Activated B cell treated with CpG ODN at 0.5 μM for 24 hours (primary cell): ENCODE measurements at regions of chr9 and their contacts with region 1.

Region 1: GRCh38 chr9:35732122-35732799 is at the starts of genes CREB3 and TLN1:
- DNase-seq: peak; percentile 94
- ATAC-seq: peak; percentile 86
- H3K4me3 Mint-ChIP-seq: peak within 1 kb of the TSS; percentile 32
- H3K27ac Mint-ChIP-seq: peak within 1 kb of the TSS; percentile 93
- H3K4me1 Mint-ChIP-seq: peaks cover 9% of the 10 kb centered on the region
- H3K27me3 Mint-ChIP-seq: no peaks in the 10 kb centered on the region
- CTCF ChIP-seq: no peak
- total RNA-seq, gene CREB3: 13.8 and 16.9 TPM in 2 replicates
- total RNA-seq, gene TLN1: 327 and 362 TPM in 2 replicates

Region 2: DNA sequence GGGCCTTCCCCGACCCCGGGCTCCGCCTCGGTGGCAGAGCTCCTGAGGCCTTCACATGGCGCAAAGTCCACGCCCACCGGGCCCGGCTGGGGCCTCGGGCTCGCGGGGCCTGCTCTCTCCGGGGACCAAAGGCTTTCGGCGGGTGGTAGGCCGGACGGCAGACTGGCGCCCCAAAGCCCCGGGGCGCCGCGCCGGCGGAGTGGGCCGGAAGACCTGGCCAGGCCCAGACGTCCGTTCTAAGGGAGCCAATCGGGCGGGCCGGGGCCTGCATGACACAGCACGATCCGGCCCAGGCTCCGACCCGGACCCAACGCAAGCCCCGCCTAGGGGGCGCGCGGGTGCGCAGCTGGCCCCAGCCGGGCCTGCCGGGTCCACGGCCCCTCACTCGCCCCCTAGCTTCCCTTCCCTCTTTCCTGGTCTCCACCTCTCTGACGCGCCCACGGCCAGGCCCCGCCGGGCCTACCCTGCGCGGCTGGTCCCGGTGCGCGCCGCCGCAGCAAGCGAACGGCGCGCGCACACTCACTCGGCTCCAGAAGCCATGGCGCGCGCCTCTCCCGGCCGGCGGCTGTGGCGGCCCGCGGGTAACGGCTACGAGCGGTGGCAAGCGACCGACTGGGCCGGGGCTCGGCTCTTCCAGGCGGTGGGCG is 660.3 kb before region 1 on chr9:
- CTCF ChIA-PET with region 1: no interaction called
- POLR2A ChIA-PET with region 1: no interaction called
- intact Hi-C with region 1: loop called (anchors 1 kb)
- DNase-seq: peak; percentile 80
- ATAC-seq: peak; percentile 63
- H3K4me3 Mint-ChIP-seq: peak overlapping the region; percentile 89
- H3K27ac Mint-ChIP-seq: peak overlapping the region; percentile 93
- H3K4me1 Mint-ChIP-seq: peaks cover 51% of the 10 kb centered on the region
- H3K27me3 Mint-ChIP-seq: no peaks in the 10 kb centered on the region
- CTCF ChIP-seq: no peak

Region 3: DNA sequence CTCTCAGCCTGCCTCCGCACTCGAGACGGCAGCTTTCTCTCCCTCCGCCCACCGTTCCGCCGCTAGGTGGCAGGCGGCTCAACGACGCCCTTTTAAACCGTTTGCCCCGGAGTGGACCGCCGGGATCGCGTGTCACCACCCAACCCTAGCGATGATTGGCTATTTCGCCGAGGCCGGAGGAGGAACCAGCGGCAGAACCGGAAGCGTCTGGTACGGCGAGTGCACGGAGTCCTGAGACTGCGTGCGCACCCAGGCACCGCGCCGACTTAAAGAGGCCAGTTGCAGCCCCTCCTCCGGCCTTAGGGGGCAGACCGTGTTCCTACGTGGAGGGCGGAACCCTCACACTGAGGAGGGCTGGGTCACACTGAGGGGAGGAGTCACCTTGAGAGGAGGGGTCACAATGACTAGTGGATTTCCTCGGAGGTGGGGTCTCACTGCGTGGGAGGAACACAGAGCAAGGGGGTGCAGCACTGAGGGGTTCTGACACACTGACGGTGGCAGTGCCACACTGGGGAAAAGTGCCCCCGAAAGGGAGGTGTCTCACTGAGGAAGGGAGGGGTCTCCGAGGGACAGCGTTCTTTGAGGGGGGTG is 128.2 kb before region 1 on chr9:
- CTCF ChIA-PET with region 1: interaction called, 17 read pairs
- POLR2A ChIA-PET with region 1: interaction called, 27 read pairs
- intact Hi-C with region 1: loop called (anchors 1 kb)
- DNase-seq: peak; percentile 95
- ATAC-seq: peak; percentile 90
- H3K4me3 Mint-ChIP-seq: peak overlapping the region; percentile 97
- H3K27ac Mint-ChIP-seq: peak overlapping the region; percentile 97
- H3K4me1 Mint-ChIP-seq: peaks cover 37% of the 10 kb centered on the region
- H3K27me3 Mint-ChIP-seq: no peaks in the 10 kb centered on the region
- CTCF ChIP-seq: peak; percentile 76

Region 4: DNA sequence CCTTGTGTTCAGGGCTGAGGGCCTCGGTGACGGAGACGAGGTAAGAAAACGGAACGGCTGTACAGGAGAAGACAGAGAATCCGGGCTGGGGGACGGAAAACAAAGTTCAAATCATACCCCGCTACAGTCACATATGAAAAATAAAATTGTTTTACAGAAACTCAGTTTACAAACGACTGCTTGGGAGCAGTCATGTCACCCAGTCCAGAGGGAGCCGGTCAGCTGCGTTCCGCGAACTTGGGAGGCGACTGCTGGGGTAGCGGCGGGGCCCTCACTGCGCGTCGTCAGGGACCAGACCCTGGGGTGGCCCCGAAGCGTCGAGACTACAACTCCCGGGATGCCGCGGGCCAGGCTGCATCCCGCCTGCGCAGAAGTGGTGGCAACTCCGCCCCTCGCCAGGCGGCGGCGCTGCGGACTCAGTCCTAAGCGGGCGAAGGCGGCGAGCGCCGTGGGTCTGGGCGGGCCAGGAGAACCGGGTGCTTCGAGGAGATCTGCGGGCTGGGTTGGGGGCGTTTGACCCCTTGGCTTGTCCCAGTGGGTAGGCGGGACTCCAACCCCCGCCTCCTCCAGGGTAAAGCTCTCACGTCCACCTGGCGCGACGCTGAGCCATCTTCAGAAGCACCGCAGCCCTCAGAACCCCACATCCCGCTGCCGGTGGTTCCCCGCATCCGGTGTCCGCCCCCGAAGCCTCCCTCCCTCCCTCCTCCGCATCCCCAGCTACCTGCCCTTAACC is 85.6 kb before region 1 on chr9:
- CTCF ChIA-PET with region 1: interaction called, 11 read pairs
- POLR2A ChIA-PET with region 1: interaction called, 47 read pairs
- intact Hi-C with region 1: loop called (anchors 1 kb)
- DNase-seq: peak; percentile 94
- ATAC-seq: peak; percentile 88
- H3K4me3 Mint-ChIP-seq: peak overlapping the region; percentile 97
- H3K27ac Mint-ChIP-seq: peak overlapping the region; percentile 98
- H3K4me1 Mint-ChIP-seq: peaks cover 90% of the 10 kb centered on the region
- H3K27me3 Mint-ChIP-seq: no peaks in the 10 kb centered on the region
- CTCF ChIP-seq: peak; percentile 65

Region 5: GRCh38 chr9:35716230-35716629 is 16.0 kb before region 1 on chr9:
- CTCF ChIA-PET with region 1: interaction called, 6 read pairs
- POLR2A ChIA-PET with region 1: interaction called, 38 read pairs
- intact Hi-C with region 1: loop called (anchors 1 kb)
- DNase-seq: no peak
- ATAC-seq: no peak
- H3K4me3 Mint-ChIP-seq: no peak overlapping the region
- H3K27ac Mint-ChIP-seq: no peak overlapping the region
- H3K4me1 Mint-ChIP-seq: peaks cover 26% of the 10 kb centered on the region
- H3K27me3 Mint-ChIP-seq: no peaks in the 10 kb centered on the region
- CTCF ChIP-seq: no peak

Region 6: GRCh38 chr9:35790385-35791296 is 58.4 kb after region 1 on chr9:
- CTCF ChIA-PET with region 1: interaction called, 11 read pairs
- POLR2A ChIA-PET with region 1: no interaction called
- intact Hi-C with region 1: loop called (anchors 2 kb)
- DNase-seq: no peak
- ATAC-seq: peak; percentile 92
- H3K4me3 Mint-ChIP-seq: peak overlapping the region; percentile 58
- H3K27ac Mint-ChIP-seq: no peak overlapping the region
- H3K4me1 Mint-ChIP-seq: peaks cover 10% of the 10 kb centered on the region
- H3K27me3 Mint-ChIP-seq: peaks cover 5% of the 10 kb centered on the region
- CTCF ChIP-seq: no peak

Region 7: GRCh38 chr9:35882263-35882848 is 150.1 kb after region 1 on chr9:
- CTCF ChIA-PET with region 1: interaction called, 21 read pairs
- POLR2A ChIA-PET with region 1: no interaction called
- intact Hi-C with region 1: loop called (anchors 1 kb)
- DNase-seq: peak; percentile 74
- ATAC-seq: peak; percentile 58
- H3K4me3 Mint-ChIP-seq: no peak overlapping the region
- H3K27ac Mint-ChIP-seq: no peak overlapping the region
- H3K4me1 Mint-ChIP-seq: no peaks in the 10 kb centered on the region
- H3K27me3 Mint-ChIP-seq: peaks cover 10% of the 10 kb centered on the region
- CTCF ChIP-seq: no peak